Head of caudate nucleus (tissue), 42 donors: ENCODE measurements at regions of chr1 and their contacts with region 1.

Region 1: GRCh38 chr1:244047621-244048471 is 3.2 kb upstream of the ZBTB18 start:
- DNase-seq: peak; percentile 68 to 100 (median 99)

Region 2: GRCh38 chr1:243255791-243256512 is 791.9 kb before region 1 on chr1 and contains the start of gene SDCCAG8:
- intact Hi-C with region 1: loop called (anchors 10 kb)
- DNase-seq: peak; percentile 96 to 100 (median 99)

Region 3: GRCh38 chr1:243471754-243472745 is 575.8 kb before region 1 on chr1:
- intact Hi-C with region 1: loop called (anchors 10 kb)
- DNase-seq: no peak

Region 4: GRCh38 chr1:243831463-243831862 is 216.4 kb before region 1 on chr1:
- intact Hi-C with region 1: no loop called
- DNase-seq: no peak

Region 5: DNA sequence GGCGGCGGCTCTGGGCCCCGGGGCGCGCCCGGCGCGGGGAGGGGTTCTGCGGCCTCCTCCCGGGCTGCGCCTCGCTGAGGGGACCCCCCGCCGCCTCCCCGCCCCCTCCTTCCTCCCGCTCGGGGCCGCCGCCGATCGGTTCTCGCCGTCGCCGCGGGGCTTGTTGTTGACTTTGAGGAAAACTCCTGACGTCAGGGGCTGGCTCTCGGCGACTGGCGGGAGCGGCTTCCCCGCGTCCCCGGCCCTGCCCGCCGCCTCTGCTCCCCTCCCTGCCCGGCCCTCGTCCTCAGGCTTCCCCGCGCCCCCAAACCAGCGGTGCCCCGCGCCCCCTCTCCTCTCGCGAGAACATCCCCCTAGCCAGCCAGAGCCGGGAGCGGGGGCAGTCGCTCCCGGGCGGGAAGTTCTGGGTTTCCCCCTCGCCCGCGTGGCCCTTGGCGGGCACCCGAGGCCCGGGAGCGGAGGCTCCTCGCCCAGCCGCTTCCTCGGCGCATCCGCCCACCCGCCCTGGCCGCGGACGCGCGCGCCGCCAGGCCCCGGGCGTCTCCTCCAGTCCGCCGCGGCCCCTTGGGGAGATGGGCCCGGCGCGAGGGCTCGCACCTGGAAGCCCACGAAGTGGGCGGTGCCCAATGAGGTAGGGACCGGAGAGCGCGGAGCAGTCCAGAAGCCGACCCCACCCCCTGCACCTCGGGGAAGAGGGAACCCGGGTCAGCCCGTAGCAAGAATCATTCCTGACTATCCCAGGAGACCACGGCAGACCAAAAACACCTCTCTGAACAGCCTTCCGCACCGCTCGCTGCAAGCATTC is 197.2 kb before region 1 on chr1:
- intact Hi-C with region 1: loop called (anchors 5 kb)
- DNase-seq: peak; percentile 44 to 91 (median 80)

Region 6: DNA sequence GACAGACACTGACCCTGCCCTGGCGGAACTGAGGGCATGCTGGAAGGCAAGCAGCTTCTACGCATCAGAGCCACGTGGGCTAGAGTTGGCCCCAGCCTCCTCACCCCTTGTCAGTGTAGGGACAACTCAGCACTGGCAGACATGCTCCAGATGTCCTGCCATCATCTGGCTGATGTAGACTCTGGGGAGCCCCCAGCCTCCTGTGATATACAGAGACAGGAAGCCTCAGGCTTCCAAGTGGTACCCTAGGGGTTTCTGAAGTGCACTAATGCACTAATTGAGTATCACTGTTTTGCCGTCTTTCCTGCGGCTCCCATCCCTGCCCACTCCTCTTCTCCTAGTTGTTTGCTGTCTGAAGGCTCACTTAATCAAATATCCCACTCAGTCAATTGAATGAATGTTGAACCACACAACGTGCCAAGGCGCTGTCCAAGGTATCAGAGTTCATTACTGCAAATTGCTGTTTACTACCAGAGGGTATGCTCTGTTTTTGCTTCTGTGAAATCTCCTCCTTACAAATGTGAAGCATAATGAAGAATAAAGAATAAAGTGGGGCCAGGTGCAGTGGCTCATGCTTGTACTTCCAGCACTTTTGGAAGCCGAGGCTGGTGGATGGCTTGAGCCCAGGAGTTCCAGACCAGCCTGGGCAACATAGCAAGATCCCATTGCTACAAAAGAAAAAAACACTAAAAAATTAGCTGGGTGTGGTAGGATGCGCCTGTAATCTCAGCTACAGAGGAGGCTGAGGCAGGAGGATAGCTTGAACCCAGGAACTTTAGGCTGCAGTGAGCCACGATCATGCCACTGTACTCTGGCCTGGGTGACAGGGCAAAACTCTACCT is 73.2 kb before region 1 on chr1:
- intact Hi-C with region 1: no loop called
- DNase-seq: no peak

Region 7: DNA sequence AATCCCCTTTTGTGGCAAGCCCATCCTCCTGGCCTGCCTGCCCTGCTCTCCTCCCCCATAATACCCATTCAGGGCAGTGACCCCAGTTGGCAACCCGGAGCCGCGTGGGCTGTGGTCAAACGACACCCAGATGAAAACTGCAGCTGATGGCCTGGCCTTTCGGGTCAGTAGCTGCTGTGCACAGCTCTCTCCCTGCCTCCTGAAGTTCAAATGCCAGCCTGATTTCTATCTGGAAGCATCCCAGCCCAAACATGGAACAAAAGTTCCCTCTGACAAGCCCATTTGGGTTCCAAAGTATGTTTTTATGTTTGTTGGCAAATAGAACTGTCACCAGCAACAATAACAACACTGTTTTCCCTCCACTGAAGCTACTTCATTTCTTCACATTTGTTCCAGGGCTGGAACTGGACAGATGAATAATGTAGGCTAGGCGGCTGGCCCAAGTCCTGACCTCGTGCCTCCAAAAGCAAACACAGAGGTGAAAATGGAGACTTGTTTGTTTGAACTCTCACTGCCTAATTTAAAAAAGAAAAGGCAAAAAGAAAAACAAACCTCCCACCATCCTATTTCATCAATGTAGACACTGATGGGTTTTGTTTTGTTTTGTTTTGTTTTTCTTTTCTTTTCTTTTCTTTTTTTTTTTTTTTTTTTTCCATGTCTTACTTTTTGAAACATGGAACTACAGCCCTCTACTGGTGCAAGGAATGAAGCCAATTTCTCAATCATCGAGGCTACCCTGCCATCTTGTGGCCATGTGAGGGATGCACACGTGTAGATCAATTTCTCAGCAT is 224.8 kb after region 1 on chr1:
- intact Hi-C with region 1: loop called (anchors 2 kb)
- DNase-seq: peak; percentile 27 to 91 (median 77)

Region 8: DNA sequence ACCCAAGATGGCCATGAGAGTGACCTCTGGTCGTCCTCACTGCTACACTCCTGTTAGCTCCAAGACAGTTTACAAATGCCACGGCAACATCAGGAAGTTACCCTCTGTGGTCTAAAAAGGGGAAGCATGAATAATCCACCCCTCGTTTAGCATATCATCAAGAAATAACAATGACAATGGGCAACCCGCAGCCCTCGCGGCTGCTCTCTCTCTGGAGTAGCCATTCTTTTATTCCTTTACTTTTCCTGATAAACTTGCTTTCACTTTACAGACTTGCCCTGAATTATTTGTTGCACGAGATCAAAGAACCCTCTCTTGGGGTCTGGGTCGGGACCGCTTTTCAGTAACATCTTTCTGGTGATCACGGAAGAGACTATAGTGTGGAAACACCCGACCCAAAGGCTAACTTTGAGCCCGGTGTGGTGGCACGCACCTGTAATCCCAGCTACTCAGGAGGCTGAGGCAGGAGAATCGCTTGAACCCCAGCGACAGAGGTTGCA is 767.8 kb after region 1 on chr1:
- intact Hi-C with region 1: no loop called
- DNase-seq: no peak